ENCODE measurements at regions of chr12 and their contacts with region 1.

Region 1: GRCh38 chr12:71840231-71840847 is 780 bp downstream of the TBC1D15 start:
- DNase-seq: no peak
- H3K4me3 ChIP-seq: peak overlapping the region; percentile 81
- H3K27ac ChIP-seq: peak overlapping the region; percentile 76
- H3K4me1 ChIP-seq: peaks cover 29% of the 10 kb centered on the region
- CTCF ChIP-seq: peak; percentile 20; the same call in 1 of the 2 replicates

Region 2: GRCh38 chr12:71663561-71664294 is 176.6 kb before region 1 on chr12 and contains the start of gene ZFC3H1:
- CTCF ChIA-PET with region 1: no interaction called
- POLR2A ChIA-PET with region 1: interaction called, 3 read pairs
- intact Hi-C with region 1: loop called (anchors 10 kb)
- DNase-seq: peak; percentile 99
- H3K4me3 ChIP-seq: peak within 1 kb of the TSS; percentile 84
- H3K27ac ChIP-seq: peak within 1 kb of the TSS; percentile 87
- H3K4me1 ChIP-seq: peaks cover 31% of the 10 kb centered on the region
- CTCF ChIP-seq: peak; percentile 65
- total RNA-seq, gene ZFC3H1: 31.1 and 45.8 TPM in 2 replicates

Region 3: DNA sequence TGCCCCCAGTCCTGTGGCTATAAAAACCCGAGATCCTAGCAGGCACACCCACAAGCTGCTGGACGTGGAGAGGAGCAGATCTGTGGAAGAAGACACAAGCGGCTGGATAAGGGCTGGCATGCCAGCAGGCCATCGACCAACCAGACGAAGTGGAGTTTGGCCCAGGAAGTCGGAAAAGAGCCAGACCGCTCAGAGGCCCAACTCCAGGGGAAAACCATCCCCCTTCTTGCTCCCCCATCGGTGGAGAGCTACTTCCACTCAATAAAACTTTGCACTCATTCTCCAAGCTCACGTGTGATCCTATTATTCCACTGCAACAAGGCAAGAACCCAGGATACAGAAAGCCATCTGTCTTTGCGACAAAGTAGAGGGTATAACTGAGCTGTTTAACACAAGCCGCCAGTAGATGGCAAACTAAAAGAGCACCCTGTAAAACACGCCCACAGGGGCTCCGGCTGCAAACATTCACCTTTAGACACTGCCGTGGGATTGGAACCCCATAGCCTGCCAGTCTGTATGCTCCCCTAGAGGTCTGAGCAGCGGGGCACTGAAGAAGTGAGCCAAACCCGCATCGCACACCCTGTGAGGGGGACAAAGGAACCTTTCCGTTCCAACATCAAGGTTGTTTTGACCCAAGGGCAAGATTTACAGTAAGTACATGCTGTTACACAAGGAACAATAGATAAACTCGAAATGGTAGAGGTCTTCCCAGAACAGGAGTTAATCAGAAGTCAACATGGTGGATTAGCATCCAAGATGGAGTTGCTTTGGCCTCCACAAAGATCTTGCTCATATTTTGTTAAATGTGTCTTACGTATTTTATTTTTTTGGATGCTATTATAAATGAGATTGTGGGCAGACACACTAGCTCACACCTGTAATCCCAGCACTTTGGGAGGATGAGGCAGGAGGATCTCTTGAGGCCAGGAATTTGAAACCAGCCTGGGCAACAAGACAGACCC is 108.3 kb before region 1 on chr12:
- CTCF ChIA-PET with region 1: no interaction called
- POLR2A ChIA-PET with region 1: no interaction called
- intact Hi-C with region 1: no loop called
- DNase-seq: peak; percentile 80
- H3K4me3 ChIP-seq: peak overlapping the region; percentile 16
- H3K27ac ChIP-seq: no peak overlapping the region
- H3K4me1 ChIP-seq: peaks cover 17% of the 10 kb centered on the region
- CTCF ChIP-seq: peak; percentile 77

Region 4: GRCh38 chr12:71754461-71755145 is 85.7 kb before region 1 on chr12 and contains the start of gene RAB21:
- CTCF ChIA-PET with region 1: no interaction called
- POLR2A ChIA-PET with region 1: no interaction called
- intact Hi-C with region 1: loop called (anchors 2 kb)
- DNase-seq: peak; percentile 98
- H3K4me3 ChIP-seq: peak within 1 kb of the TSS; percentile 96
- H3K27ac ChIP-seq: peak within 1 kb of the TSS; percentile 66
- H3K4me1 ChIP-seq: peaks cover 22% of the 10 kb centered on the region
- CTCF ChIP-seq: no peak; the same call in 1 of the 2 replicates
- total RNA-seq, gene RAB21: 11.7 and 18.2 TPM in 2 replicates

Region 5: GRCh38 chr12:71780237-71780822 is 60.0 kb before region 1 on chr12:
- CTCF ChIA-PET with region 1: no interaction called
- POLR2A ChIA-PET with region 1: interaction called, 3 read pairs
- intact Hi-C with region 1: loop called (anchors 5 kb)
- DNase-seq: peak; percentile 55
- H3K4me3 ChIP-seq: no peak overlapping the region
- H3K27ac ChIP-seq: no peak overlapping the region
- H3K4me1 ChIP-seq: no peaks in the 10 kb centered on the region
- CTCF ChIP-seq: peak; percentile 97

Region 6: DNA sequence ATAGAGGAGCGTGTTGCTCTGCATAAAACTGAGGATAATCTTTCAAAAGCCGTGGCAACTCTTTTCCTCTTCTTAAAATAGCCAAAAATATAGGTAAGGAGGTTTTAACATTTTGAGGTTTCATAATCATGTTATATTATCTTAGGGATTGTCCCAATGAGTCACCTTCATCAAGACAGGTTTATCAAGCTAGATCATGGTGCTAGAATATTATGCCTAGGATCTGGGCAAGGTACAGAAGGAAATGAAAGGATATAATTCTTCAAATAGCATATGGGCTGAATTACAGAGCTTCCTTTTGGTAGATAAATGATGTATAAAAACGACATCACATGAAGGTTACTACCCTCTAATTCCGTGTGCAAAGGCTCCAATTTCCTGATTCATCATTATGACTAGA is 29.4 kb before region 1 on chr12:
- CTCF ChIA-PET with region 1: no interaction called
- POLR2A ChIA-PET with region 1: no interaction called
- intact Hi-C with region 1: no loop called
- DNase-seq: no peak
- H3K4me3 ChIP-seq: no peak overlapping the region
- H3K27ac ChIP-seq: no peak overlapping the region
- H3K4me1 ChIP-seq: no peaks in the 10 kb centered on the region
- CTCF ChIP-seq: no peak

Measured in OCI-LY7 (cell line).